ENCODE measurements at regions of chr21 and their contacts with region 1.

Region 1: DNA sequence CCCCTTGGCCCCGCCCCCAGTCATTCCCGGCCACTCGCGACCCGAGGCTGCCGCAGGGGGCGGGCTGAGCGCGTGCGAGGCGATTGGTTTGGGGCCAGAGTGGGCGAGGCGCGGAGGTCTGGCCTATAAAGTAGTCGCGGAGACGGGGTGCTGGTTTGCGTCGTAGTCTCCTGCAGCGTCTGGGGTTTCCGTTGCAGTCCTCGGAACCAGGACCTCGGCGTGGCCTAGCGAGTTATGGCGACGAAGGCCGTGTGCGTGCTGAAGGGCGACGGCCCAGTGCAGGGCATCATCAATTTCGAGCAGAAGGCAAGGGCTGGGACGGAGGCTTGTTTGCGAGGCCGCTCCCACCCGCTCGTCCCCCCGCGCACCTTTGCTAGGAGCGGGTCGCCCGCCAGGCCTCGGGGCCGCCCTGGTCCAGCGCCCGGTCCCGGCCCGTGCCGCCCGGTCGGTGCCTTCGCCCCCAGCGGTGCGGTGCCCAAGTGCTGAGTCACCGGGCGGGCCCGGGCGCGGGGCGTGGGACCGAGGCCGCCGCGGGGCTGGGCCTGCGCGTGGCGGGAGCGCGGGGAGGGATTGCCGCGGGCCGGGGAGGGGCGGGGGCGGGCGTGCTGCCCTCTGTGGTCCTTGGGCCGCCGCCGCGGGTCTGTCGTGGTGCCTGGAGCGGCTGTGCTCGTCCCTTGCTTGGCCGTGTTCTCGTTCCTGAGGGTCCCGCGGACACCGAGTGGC is at the start of gene SOD1:
- DNase-seq: peak; percentile 97
- ATAC-seq: peak; percentile 98
- total RNA-seq, gene SOD1: 430 TPM

Region 2: GRCh38 chr21:31731802-31732596 is 72.3 kb after region 1 on chr21 and contains the start of gene SCAF4:
- intact Hi-C with region 1: loop called (anchors 5 kb)
- DNase-seq: peak; percentile 96
- ATAC-seq: peak; percentile 96
- total RNA-seq, gene SCAF4: 15.9 TPM